ENCODE measurements at regions of chr4 and their contacts with region 1.

Region 1: GRCh38 chr4:26860157-26860921 is at the start of gene STIM2:
- DNase-seq: peak; percentile 93
- ATAC-seq: peak; percentile 76
- H3K4me3 ChIP-seq: peak within 1 kb of the TSS; percentile 80 to 91 (median 89)
- H3K27ac ChIP-seq: peak within 1 kb of the TSS; percentile 78
- H3K4me1 ChIP-seq: peaks cover 54% of the 10 kb centered on the region
- H3K27me3 ChIP-seq: no peaks in the 10 kb centered on the region; a peak in 1 of 5 replicates
- CTCF ChIP-seq: peak; percentile 80
- EP300 ChIP-seq: no peak
- POLR2A ChIP-seq: peak in 1 of 2 experiments; percentile 65; a peak in 2 of 4 replicates
- RAD21 ChIP-seq: peak; percentile 48
- total RNA-seq, gene STIM2: 8.2 and 19.3 TPM in 2 replicates

Region 2: GRCh38 chr4:26590639-26591038 is 269.7 kb before region 1 on chr4:
- CTCF ChIA-PET with region 1: no interaction called
- POLR2A ChIA-PET with region 1: no interaction called
- in situ Hi-C with region 1: no loop called
- intact Hi-C with region 1: no loop called
- DNase-seq: no peak
- ATAC-seq: no peak
- H3K4me3 ChIP-seq: no peak overlapping the region
- H3K27ac ChIP-seq: no peak overlapping the region
- H3K4me1 ChIP-seq: no peaks in the 10 kb centered on the region
- H3K27me3 ChIP-seq: no peaks in the 10 kb centered on the region
- CTCF ChIP-seq: no peak
- EP300 ChIP-seq: no peak
- POLR2A ChIP-seq: no peak
- RAD21 ChIP-seq: no peak

Region 3: DNA sequence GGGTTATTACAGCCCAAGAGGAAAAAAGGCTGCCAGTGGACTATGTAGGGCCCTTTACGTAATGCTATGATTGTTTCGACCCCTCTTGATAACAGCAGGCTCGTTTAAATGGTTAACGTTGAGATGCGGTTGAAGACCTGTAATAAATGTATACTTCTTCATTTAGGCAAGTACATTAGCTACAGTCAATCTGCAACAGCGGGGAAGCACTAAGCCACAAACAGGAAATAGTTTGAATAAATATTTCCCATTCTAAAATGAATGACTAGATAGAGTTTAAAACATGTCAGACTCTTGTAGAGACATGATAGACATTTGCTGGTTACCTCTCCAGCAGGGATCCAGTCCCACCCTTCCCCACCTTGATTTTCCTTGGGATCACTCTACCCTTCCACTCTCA is 37.8 kb before region 1 on chr4:
- CTCF ChIA-PET with region 1: interaction called, 5 read pairs
- POLR2A ChIA-PET with region 1: interaction called, 11 read pairs
- in situ Hi-C with region 1: loop called (anchors 5 kb)
- intact Hi-C with region 1: loop called (anchors 1 kb)
- DNase-seq: no peak
- ATAC-seq: no peak; the same call in 2 of the 3 replicates
- H3K4me3 ChIP-seq: peak overlapping the region in 2 of 3 experiments; percentile 23 to 34; a peak in 2 of 6 replicates
- H3K27ac ChIP-seq: peak overlapping the region; percentile 85
- H3K4me1 ChIP-seq: peaks cover 36% of the 10 kb centered on the region
- H3K27me3 ChIP-seq: no peaks in the 10 kb centered on the region
- CTCF ChIP-seq: no peak
- EP300 ChIP-seq: no peak
- POLR2A ChIP-seq: no peak
- RAD21 ChIP-seq: no peak

Region 4: GRCh38 chr4:26885912-26886274 is 25.6 kb after region 1 on chr4:
- CTCF ChIA-PET with region 1: no interaction called
- POLR2A ChIA-PET with region 1: no interaction called
- in situ Hi-C with region 1: no loop called
- intact Hi-C with region 1: no loop called
- DNase-seq: no peak
- ATAC-seq: no peak
- H3K4me3 ChIP-seq: no peak overlapping the region
- H3K27ac ChIP-seq: no peak overlapping the region
- H3K4me1 ChIP-seq: no peaks in the 10 kb centered on the region
- H3K27me3 ChIP-seq: no peaks in the 10 kb centered on the region
- CTCF ChIP-seq: no peak
- EP300 ChIP-seq: no peak
- POLR2A ChIP-seq: no peak
- RAD21 ChIP-seq: no peak

Measured in HepG2 (cell line).